ENCODE measurements at regions of chr2 and their contacts with region 1.

Region 1: GRCh38 chr2:219177552-219178376 is at the start of gene RETREG2:
- DNase-seq: peak; percentile 97
- ATAC-seq: peak; percentile 44
- H3K4me3 ChIP-seq: peak within 1 kb of the TSS; percentile 87 to 97 (median 95)
- H3K4me3 Mint-ChIP-seq: peak within 1 kb of the TSS; percentile 99
- H3K27ac ChIP-seq: peak within 1 kb of the TSS; percentile 94 to 97
- H3K27ac Mint-ChIP-seq: peak within 1 kb of the TSS; percentile 99
- H3K4me1 ChIP-seq: peaks cover 17 to 48% of the 10 kb centered on the region in 2 donors
- H3K4me1 Mint-ChIP-seq: peaks cover 46% of the 10 kb centered on the region
- H3K27me3 ChIP-seq: no peaks in the 10 kb centered on the region
- H3K27me3 Mint-ChIP-seq: no peaks in the 10 kb centered on the region
- CTCF ChIP-seq: peak; percentile 55
- total RNA-seq, gene RETREG2: 86.3 and 102 TPM in 2 replicates

Region 2: GRCh38 chr2:218395797-218396687 is 781.7 kb before region 1 on chr2:
- CTCF ChIA-PET with region 1: no interaction called
- POLR2A ChIA-PET with region 1: no interaction called
- intact Hi-C with region 1: loop called (anchors 2 kb)
- DNase-seq: peak; percentile 98
- ATAC-seq: peak; percentile 69
- H3K4me3 ChIP-seq: peak overlapping the region; percentile 75 to 94 (median 89)
- H3K4me3 Mint-ChIP-seq: peak overlapping the region; percentile 96
- H3K27ac ChIP-seq: peak overlapping the region; percentile 88 to 89
- H3K27ac Mint-ChIP-seq: peak overlapping the region; percentile 99
- H3K4me1 ChIP-seq: peaks cover 35 to 61% of the 10 kb centered on the region in 2 donors
- H3K4me1 Mint-ChIP-seq: peaks cover 53% of the 10 kb centered on the region
- H3K27me3 ChIP-seq: no peaks in the 10 kb centered on the region
- H3K27me3 Mint-ChIP-seq: no peaks in the 10 kb centered on the region
- CTCF ChIP-seq: peak; percentile 83

Region 3: DNA sequence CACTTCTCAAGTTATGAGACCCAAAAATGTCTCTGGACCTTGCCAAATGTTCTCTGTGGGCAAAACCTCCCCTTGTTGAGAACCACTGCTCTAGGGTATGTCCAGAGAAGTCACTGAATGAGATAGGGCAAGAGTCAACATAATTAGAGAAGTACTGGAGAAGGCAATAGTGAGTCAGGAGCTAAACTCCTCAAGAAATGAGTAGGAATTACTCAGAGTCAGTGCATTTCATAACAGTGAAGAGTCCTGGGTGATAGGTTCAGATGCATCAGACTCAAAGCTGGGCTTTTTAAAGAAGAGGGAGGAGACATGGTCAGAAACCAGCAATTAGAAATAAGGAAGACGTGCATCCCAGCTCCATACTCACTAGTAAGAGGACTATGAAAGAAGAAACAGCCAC is 78.4 kb before region 1 on chr2:
- CTCF ChIA-PET with region 1: no interaction called
- POLR2A ChIA-PET with region 1: no interaction called
- intact Hi-C with region 1: no loop called
- DNase-seq: no peak
- ATAC-seq: no peak
- H3K4me3 ChIP-seq: no peak overlapping the region
- H3K4me3 Mint-ChIP-seq: no peak overlapping the region
- H3K27ac ChIP-seq: no peak overlapping the region
- H3K27ac Mint-ChIP-seq: no peak overlapping the region
- H3K4me1 ChIP-seq: no peaks in the 10 kb centered on the region
- H3K4me1 Mint-ChIP-seq: no peaks in the 10 kb centered on the region
- H3K27me3 ChIP-seq: no peaks in the 10 kb centered on the region
- H3K27me3 Mint-ChIP-seq: no peaks in the 10 kb centered on the region
- CTCF ChIP-seq: no peak

Region 4: GRCh38 chr2:219206442-219207253 is 28.9 kb after region 1 on chr2 and contains the start of gene ZFAND2B:
- CTCF ChIA-PET with region 1: interaction called, 63 read pairs
- POLR2A ChIA-PET with region 1: interaction called, 46 read pairs
- intact Hi-C with region 1: loop called (anchors 1 kb)
- DNase-seq: peak; percentile 97
- ATAC-seq: peak; percentile 91
- H3K4me3 ChIP-seq: peak within 1 kb of the TSS; percentile 53 to 82 (median 76)
- H3K4me3 Mint-ChIP-seq: peak within 1 kb of the TSS; percentile 96
- H3K27ac ChIP-seq: peak within 1 kb of the TSS; percentile 84 to 94
- H3K27ac Mint-ChIP-seq: peak within 1 kb of the TSS; percentile 98
- H3K4me1 ChIP-seq: peaks cover 16 to 23% of the 10 kb centered on the region in 2 donors
- H3K4me1 Mint-ChIP-seq: peaks cover 28% of the 10 kb centered on the region
- H3K27me3 ChIP-seq: no peaks in the 10 kb centered on the region
- H3K27me3 Mint-ChIP-seq: no peaks in the 10 kb centered on the region
- CTCF ChIP-seq: no peak
- total RNA-seq, gene ZFAND2B: 55.2 and 58.7 TPM in 2 replicates

Region 5: GRCh38 chr2:219245148-219245898 is 67.6 kb after region 1 on chr2 and contains the starts of genes GLB1L and STK16:
- CTCF ChIA-PET with region 1: interaction called, 13 read pairs
- POLR2A ChIA-PET with region 1: interaction called, 29 read pairs
- intact Hi-C with region 1: loop called (anchors 2 kb)
- DNase-seq: peak; percentile 93
- ATAC-seq: peak; percentile 67
- H3K4me3 ChIP-seq: peak within 1 kb of the TSS; percentile 50 to 98 (median 94)
- H3K4me3 Mint-ChIP-seq: peak within 1 kb of the TSS; percentile 92
- H3K27ac ChIP-seq: peak within 1 kb of the TSS; percentile 87 to 92
- H3K27ac Mint-ChIP-seq: peak within 1 kb of the TSS; percentile 96
- H3K4me1 ChIP-seq: peaks cover 52 to 58% of the 10 kb centered on the region in 2 donors
- H3K4me1 Mint-ChIP-seq: peaks cover 62% of the 10 kb centered on the region
- H3K27me3 ChIP-seq: no peaks in the 10 kb centered on the region
- H3K27me3 Mint-ChIP-seq: no peaks in the 10 kb centered on the region
- CTCF ChIP-seq: no peak
- total RNA-seq, gene GLB1L: 3.9 and 4.1 TPM in 2 replicates
- total RNA-seq, gene STK16: 29.0 and 29.3 TPM in 2 replicates

Region 6: GRCh38 chr2:219294356-219295351 is 116.9 kb after region 1 on chr2:
- CTCF ChIA-PET with region 1: interaction called, 136 read pairs
- POLR2A ChIA-PET with region 1: interaction called, 10 read pairs
- intact Hi-C with region 1: no loop called
- DNase-seq: peak; percentile 95
- ATAC-seq: peak; percentile 97
- H3K4me3 ChIP-seq: peak overlapping the region in 4 of 5 experiments; percentile 48 to 67 (median 60)
- H3K4me3 Mint-ChIP-seq: peak overlapping the region; percentile 80
- H3K27ac ChIP-seq: peak overlapping the region; percentile 62 to 74
- H3K27ac Mint-ChIP-seq: peak overlapping the region; percentile 74
- H3K4me1 ChIP-seq: peaks cover 14 to 19% of the 10 kb centered on the region in 2 donors
- H3K4me1 Mint-ChIP-seq: peaks cover 16% of the 10 kb centered on the region
- H3K27me3 ChIP-seq: peaks cover 0 to 7% (median 1%) of the 10 kb centered on the region in 4 experiments
- H3K27me3 Mint-ChIP-seq: no peaks in the 10 kb centered on the region
- CTCF ChIP-seq: peak; percentile 99